Activated T-helper 1 cell treated with anti-CD3 and anti-CD28 coated beads, Interleukin-12 subunit alpha, Interleukin-12 subunit beta, Interleukin-2, Interleukin-4 antibody, amounts not matched to agents 30 ng/mL and 10 ng/mL and 1 ng/mL, durations not matched to agents 14 hours and 24 hours and 36 hours (primary cell): ENCODE measurements at regions of chr2 and their contacts with region 1.

Region 1: DNA sequence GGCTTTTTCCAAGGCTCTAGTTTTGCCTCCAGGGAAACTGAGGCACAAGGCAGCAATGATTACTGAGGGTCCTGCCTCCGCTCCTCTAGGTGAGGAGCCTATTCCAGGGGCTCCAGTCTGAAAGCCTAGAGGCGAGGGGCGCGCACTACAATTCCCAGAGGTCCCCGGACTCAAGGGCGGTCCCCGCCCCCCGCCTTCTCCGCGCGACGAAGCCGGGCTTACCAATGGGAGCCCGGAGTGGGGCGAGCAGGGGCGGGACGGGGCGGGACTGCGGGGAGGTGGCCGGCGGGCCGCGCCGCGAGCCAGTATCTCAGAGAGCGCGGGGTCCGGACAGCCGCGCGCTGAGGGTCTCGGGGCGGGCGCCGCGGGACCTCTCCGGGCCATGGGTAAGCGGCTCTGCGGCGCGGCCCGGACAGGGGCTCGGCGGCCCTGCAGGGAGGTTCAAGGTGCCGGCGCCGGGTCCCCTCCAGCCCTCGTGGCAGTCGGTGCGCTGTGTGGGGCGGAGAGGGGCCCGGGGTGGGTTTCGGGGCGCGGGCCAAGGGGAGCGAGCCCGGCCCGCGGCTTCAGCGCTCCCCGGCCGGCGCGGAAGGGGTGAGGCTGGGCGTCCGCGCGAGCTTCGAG is at the start of gene ARID5A:
- DNase-seq: peak; percentile 86
- H3K4me3 Mint-ChIP-seq: peak within 1 kb of the TSS; percentile 91
- H3K27ac Mint-ChIP-seq: peak within 1 kb of the TSS; percentile 88
- H3K4me1 Mint-ChIP-seq: peaks cover 74% of the 10 kb centered on the region
- H3K27me3 Mint-ChIP-seq: peaks cover 1% of the 10 kb centered on the region
- total RNA-seq, gene ARID5A: 233 and 240 TPM in 2 replicates

Region 2: DNA sequence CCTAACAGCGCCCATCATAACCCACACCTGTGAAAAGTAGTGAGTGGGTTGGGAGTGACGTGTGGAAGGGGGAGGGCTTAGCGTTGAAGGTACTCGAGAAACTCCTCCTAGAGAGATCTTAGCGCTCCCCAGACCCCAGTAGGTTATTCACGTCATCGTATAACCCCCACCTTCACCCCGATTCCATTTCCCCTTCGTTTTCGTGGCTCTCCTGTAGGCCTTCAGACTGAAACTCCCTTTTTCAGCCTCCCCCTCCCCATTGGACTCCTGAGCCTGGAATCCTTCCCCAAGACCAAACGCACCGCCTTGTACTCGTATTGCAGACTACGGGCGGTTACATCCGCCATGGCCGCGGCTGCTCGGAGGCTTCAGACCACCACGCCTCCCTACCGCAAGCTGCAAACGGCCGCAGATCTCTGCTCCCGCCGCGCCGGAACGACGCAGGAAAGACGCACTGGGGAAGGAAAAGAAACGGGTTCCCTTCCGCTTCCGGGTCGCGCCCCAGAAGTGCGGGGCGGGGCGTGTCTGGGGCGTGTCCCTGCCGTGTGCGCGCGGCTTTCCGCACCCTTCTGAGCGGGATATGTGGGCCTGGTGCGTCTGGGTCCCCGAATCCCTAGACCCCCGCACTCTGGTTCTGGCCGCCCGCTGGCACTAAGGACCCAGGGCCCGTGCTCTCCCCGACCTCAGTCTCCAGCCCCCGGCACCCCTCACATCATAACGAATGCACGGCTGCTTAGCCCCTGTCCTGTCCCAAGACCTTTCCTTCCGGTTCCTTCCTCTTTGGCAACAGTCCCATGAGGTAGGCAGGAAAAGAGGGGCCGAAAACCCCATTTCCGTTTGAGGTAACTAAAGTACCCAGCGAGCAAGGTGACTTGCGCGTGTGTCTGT is 231.2 kb before region 1 on chr2 and contains the start of gene SNRNP200:
- intact Hi-C with region 1: loop called (anchors 2 kb)
- DNase-seq: peak; percentile 87
- H3K4me3 Mint-ChIP-seq: peak within 1 kb of the TSS; percentile 99
- H3K27ac Mint-ChIP-seq: peak within 1 kb of the TSS; percentile 96
- H3K4me1 Mint-ChIP-seq: peaks cover 45% of the 10 kb centered on the region
- H3K27me3 Mint-ChIP-seq: no peaks in the 10 kb centered on the region
- total RNA-seq, gene SNRNP200: 192 and 196 TPM in 2 replicates

Region 3: DNA sequence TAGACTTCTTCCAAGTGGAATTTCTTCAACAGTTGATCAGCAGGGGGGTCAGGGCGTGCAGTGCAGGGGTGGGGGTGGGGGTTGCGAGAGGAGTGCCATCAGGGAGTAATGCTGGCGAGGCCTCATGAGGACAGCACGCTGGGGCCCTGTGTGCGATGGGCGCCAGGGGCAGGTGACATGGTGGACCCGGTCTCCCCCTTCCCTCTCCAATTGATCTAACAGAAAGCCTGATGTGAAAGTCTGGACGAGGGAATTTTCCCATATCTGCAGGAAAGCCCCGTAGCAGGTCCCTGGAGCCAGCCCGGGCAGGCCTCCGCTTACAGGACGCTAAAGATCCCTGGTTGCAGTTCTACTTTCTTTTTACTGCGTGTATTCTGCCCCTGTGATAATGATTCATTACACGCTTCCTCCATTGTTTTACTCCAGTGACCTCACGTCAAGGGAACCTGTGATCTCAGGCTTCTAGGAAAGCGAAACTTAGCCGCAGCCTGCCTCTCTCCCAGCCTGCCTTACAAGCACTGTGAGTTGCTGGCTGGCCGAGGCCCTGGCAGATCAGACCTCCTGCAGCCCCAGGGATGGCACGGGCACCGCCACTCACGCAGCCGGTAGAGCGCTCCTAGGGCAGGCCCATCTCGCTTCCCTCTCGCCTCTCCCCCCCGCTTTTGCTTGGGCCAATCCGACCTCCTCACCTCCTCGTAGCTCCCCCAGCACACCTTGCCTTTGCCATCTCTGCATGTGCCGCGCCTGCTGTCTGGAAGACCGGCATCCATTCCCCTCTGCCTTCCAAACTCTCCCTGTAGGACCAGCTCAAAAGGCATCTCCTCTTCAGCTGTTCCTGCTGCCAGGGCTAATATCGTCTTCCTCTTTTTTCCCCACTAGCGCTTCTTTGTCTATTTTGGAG is 50.6 kb before region 1 on chr2:
- intact Hi-C with region 1: loop called (anchors 1 kb)
- DNase-seq: peak; percentile 88
- H3K4me3 Mint-ChIP-seq: peak overlapping the region; percentile 92
- H3K27ac Mint-ChIP-seq: peak overlapping the region; percentile 96
- H3K4me1 Mint-ChIP-seq: peaks cover 63% of the 10 kb centered on the region
- H3K27me3 Mint-ChIP-seq: peaks cover 5% of the 10 kb centered on the region

Region 4: DNA sequence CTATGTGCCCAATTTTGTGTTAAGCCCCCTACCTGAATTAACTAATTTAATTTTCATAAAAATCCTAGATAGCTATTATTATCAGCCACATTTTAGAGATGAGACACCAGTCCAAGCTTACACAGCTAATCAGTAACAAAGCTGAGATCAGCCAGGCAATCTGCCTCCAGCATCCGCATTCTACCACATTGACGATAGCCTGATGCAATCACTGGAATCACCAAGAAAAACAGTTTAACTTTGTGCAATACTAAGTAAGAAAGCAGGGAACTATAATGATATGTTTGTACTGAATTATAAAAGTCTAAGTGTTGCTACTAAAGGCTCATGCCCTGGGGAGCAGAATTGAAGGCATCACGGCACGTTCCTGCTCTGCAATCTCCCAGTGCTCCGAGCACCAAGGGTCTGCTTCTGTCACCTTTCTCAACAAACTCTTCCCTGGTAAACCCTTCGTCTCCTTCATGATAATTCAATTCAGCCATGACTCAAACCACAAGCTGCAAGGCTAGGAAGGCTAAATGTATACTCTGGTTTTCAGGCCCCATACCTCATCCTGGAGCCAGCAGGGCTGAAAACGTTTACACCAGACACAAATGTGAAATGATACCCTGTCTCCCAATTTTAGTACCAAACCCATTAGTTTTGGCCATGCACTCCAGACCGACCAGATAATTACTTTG is 82.2 kb after region 1 on chr2:
- intact Hi-C with region 1: loop called (anchors 5 kb)
- DNase-seq: no peak
- H3K4me3 Mint-ChIP-seq: no peak overlapping the region
- H3K27ac Mint-ChIP-seq: peak overlapping the region; percentile 2
- H3K4me1 Mint-ChIP-seq: peaks cover 42% of the 10 kb centered on the region
- H3K27me3 Mint-ChIP-seq: no peaks in the 10 kb centered on the region

Region 5: DNA sequence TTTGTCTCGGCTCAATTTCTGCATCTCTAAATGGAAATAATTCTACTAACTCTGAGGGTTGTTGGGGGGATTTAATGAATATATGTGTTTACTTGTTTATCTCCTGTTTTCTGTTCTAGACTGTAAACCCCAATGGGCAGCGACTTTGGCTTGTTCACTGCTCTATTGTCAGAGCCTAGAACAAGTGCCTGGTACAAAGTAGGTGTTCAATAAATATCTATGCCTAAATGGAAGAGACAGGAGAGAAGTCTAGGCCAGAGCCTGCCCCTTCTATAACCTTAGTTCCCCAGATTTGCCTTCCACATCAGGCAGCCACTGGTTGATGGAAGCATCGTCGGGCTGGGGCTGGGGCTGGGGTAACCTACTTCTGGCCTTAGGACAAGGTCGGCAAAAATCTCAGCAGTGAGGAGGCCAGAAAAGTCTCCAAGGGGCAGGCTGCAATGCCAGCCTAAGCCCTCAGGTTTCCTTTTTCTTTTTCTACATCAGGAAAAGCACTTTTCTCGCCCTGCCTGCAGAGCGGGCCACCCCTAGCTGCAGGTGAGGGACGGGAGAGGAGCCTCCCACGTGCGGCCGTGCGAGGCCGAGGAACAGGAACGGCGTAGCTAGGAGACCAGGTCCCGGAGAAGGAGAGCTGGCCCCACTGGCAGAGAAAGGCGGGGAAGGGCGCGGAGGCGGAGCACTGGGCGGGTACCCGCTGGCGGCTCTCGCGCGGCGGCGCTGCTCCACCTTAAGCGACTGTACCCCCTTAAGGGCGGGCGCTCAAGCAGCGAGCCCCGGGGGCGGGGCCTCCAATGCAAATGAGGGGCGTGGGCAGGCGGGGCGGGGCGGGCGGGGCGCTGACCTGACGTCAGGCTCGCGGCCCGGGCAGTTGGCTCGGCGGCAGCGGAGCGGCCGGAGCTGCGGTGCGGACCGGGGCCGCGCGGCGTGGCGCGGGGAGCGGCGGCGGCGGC is 223.8 kb after region 1 on chr2 and contains the start of gene CNNM4:
- intact Hi-C with region 1: loop called (anchors 2 kb)
- DNase-seq: peak; percentile 89
- H3K4me3 Mint-ChIP-seq: peak within 1 kb of the TSS; percentile 92
- H3K27ac Mint-ChIP-seq: peak within 1 kb of the TSS; percentile 88
- H3K4me1 Mint-ChIP-seq: peaks cover 54% of the 10 kb centered on the region
- H3K27me3 Mint-ChIP-seq: no peaks in the 10 kb centered on the region
- total RNA-seq, gene CNNM4: 9.9 and 11.1 TPM in 2 replicates